HepG2 (cell line): ENCODE measurements at regions of chr11 and their contacts with region 1.

Region 1: GRCh38 chr11:122062763-122063162 is 53.3 kb downstream of the BLID start:
- DNase-seq: no peak
- ATAC-seq: no peak
- H3K4me3 ChIP-seq: no peak overlapping the region
- H3K27ac ChIP-seq: no peak overlapping the region
- H3K4me1 ChIP-seq: no peaks in the 10 kb centered on the region
- H3K27me3 ChIP-seq: no peaks in the 10 kb centered on the region
- CTCF ChIP-seq: no peak
- EP300 ChIP-seq: no peak
- POLR2A ChIP-seq: no peak
- RAD21 ChIP-seq: no peak

Region 2: GRCh38 chr11:122101625-122102291 is 39.0 kb after region 1 on chr11:
- CTCF ChIA-PET with region 1: no interaction called
- POLR2A ChIA-PET with region 1: no interaction called
- in situ Hi-C with region 1: no loop called
- intact Hi-C with region 1: loop called (anchors 1 kb)
- DNase-seq: peak; percentile 20
- ATAC-seq: peak; percentile 76
- H3K4me3 ChIP-seq: no peak overlapping the region
- H3K27ac ChIP-seq: no peak overlapping the region
- H3K4me1 ChIP-seq: no peaks in the 10 kb centered on the region
- H3K27me3 ChIP-seq: no peaks in the 10 kb centered on the region
- CTCF ChIP-seq: peak; percentile 60
- EP300 ChIP-seq: no peak
- POLR2A ChIP-seq: no peak
- RAD21 ChIP-seq: no peak; the same call in 1 of the 2 replicates